HEK293 (cell line): ENCODE measurements at regions of chr17 and their contacts with region 1.

Region 1: DNA sequence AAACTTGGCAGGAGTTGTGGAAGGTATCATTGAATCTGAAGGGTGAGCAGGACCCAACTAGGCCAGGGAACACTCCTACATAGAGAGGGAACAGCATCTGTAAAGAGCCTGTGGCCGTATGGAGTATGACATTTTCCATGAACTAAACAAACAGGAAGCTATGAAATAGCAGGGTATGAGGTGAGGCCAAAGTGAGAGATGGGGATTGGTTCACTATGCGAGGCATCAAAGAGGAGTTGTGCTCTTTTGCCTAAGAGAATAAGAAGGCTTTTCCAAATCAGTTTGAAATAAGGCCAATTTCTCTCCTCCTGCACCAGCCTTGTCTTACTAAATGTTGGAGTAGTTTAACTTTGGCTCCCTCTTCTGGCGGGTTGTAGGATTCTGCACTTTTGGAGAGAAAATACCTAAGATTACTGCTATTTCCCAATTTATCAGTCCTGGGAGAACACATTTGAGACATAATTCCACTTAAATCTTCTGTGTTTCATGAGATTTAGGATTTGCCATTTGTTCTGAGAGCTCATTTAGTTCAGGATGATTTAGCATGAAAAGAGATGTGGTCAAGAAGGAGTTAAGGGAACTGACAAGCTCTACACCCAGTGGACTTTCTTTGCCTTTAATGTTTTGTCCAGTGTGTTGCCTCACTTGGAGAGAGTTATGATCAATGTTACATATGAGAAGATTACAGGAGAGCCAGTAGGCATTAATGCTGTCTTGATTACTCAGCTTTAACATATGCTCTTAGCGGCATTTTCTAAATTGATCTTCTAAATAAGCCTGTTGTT is 55.4 kb downstream of the TNRC6C start:
- H3K4me3 ChIP-seq: no peak overlapping the region
- H3K27ac ChIP-seq: no peak overlapping the region
- H3K4me1 ChIP-seq: no peaks in the 10 kb centered on the region
- CTCF ChIP-seq: peak; percentile 51

Region 2: GRCh38 chr17:77537566-77537965 is 476.3 kb before region 1 on chr17:
- CTCF ChIA-PET with region 1: interaction called, 119 read pairs
- POLR2A ChIA-PET with region 1: no interaction called
- H3K4me3 ChIP-seq: no peak overlapping the region
- H3K27ac ChIP-seq: no peak overlapping the region
- H3K4me1 ChIP-seq: peaks cover 6% of the 10 kb centered on the region
- CTCF ChIP-seq: no peak

Region 3: DNA sequence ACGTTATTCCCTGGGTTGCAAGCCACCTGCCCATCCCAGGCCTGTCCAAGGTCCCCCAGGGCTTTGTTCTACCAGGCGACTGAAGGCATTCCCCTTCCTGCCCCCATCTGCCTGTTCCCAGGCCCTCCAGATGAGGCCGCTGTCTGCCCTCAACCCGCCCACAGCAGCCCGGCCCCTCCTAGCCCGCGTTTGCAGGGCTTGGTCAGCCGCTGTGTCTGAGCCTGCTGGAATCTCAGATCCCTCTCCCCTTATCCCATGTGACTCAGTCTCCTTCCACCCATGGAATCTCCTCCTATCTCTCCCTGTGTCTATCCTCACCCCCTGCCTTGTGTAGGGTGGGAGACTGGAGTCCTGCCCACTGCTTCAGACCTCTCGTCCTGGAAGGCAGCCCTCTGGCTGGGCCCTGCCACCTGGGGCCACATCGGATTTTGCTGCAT is 241.4 kb before region 1 on chr17:
- CTCF ChIA-PET with region 1: interaction called, 21 read pairs
- POLR2A ChIA-PET with region 1: no interaction called
- H3K4me3 ChIP-seq: no peak overlapping the region
- H3K27ac ChIP-seq: no peak overlapping the region
- H3K4me1 ChIP-seq: no peaks in the 10 kb centered on the region
- CTCF ChIP-seq: peak; percentile 75

Region 4: DNA sequence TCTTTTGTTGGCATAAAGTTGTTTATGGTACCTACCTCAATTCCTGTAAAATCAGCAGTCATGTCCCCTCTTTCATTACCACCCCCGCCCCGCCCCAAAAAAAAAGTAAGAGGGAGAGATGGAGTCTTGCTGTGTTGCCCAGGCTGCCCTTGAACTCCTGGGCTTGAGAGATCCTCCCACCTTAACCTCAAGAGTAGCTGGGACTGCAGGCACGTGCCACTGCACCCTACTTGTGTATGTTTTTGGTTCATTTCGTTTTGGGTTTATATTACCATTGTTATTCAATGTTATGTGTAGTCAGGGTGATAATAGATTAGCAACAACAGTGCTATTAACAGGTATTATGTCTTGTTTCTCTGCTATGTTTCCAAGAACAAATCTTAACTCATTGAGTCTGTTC is 39.5 kb before region 1 on chr17:
- CTCF ChIA-PET with region 1: interaction called, 16 read pairs
- POLR2A ChIA-PET with region 1: no interaction called
- H3K4me3 ChIP-seq: no peak overlapping the region
- H3K27ac ChIP-seq: no peak overlapping the region
- H3K4me1 ChIP-seq: no peaks in the 10 kb centered on the region; the same call in 1 of the 2 replicates
- CTCF ChIP-seq: no peak

Region 5: GRCh38 chr17:78000341-78000740 is 13.5 kb before region 1 on chr17:
- CTCF ChIA-PET with region 1: interaction called, 55 read pairs
- POLR2A ChIA-PET with region 1: no interaction called
- H3K4me3 ChIP-seq: no peak overlapping the region
- H3K27ac ChIP-seq: no peak overlapping the region
- H3K4me1 ChIP-seq: peaks cover 19% of the 10 kb centered on the region
- CTCF ChIP-seq: no peak